ENCODE measurements at regions of chr6 and their contacts with region 1.

Region 1: DNA sequence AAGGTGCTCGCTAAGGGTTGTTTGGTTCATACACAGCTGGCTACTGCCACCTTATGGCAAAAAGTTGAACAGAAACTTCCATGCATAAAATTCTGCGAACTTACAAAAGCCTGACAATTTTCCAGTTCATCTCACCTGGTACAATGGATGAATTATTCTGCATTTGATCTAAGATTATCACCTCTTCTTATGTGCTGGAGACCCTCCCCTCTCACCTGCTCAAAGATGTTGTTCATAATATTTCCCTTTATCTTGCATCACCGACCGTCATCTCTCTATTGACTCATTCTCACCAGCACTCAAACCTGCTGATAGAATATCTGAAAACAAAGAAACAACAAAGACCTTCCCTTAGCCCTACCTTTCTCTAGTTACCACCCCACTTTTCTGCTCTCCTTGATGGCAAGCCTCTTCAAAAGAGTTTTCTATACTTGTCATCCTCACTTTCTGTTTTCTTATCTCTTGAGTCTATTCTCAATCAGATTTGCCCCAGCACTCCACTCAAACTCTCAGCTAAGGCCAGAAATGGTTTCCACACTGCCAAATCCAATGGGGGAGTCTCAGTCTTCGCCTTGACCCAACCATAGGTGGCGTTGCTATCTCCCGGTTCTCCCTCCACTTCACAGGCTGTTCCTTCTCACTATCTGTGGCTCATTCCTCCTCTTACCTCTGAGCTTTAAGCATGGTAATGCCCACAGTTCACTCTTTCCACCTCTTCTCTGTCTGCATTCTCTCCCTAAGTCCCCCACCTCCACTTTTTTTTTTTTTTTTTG is 25.8 kb downstream of the SNRNP48 start:
- DNase-seq: peak in 10 of 14 experiments; percentile 7 to 70 (median 16)
- ATAC-seq: peak; percentile 64
- H3K4me3 ChIP-seq: no peak overlapping the region
- H3K4me3 Mint-ChIP-seq: no peak overlapping the region
- H3K27ac ChIP-seq: no peak overlapping the region
- H3K27ac Mint-ChIP-seq: peak overlapping the region; percentile 4
- H3K4me1 ChIP-seq: peaks cover 5% of the 10 kb centered on the region
- H3K4me1 Mint-ChIP-seq: peaks cover 6% of the 10 kb centered on the region
- H3K27me3 ChIP-seq: peaks cover 0 to 3% of the 10 kb centered on the region in 2 experiments
- H3K27me3 Mint-ChIP-seq: no peaks in the 10 kb centered on the region
- CTCF ChIP-seq: peak; percentile 81

Region 2: DNA sequence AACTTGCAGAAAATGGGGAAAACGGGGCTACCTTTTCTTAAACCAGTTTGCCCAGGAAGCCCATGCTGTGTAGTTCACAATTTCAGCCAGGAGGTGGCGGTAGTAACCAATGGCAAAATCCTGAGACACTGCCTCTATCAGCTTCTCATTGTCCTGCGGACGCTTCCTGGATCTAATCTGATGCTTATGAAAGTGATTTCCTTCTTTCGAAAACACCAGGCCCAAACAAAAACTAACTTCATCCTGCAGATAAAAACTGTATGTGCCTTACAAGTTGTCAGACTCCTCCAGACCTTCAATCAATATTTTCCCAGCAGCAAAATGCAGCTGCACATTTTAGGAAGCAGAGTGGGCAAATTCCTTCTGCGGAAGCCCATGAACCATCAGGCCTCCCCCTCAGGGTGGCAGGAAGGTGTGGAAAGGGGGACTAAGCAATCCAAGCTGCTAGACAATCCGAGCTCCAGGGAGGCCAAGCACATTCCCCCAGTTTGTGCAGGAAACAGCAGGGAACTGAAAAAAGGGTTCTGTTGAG is 938.8 kb before region 1 on chr6:
- CTCF ChIA-PET with region 1: no interaction called
- POLR2A ChIA-PET with region 1: no interaction called
- intact Hi-C with region 1: loop called in 1 of 2 experiments (anchors 5 kb)
- DNase-seq: peak; percentile 62 to 87 (median 75)
- ATAC-seq: peak; percentile 99
- H3K4me3 ChIP-seq: no peak overlapping the region
- H3K4me3 Mint-ChIP-seq: no peak overlapping the region
- H3K27ac ChIP-seq: no peak overlapping the region
- H3K27ac Mint-ChIP-seq: peak overlapping the region; percentile 25
- H3K4me1 ChIP-seq: peaks cover 3% of the 10 kb centered on the region
- H3K4me1 Mint-ChIP-seq: peaks cover 15% of the 10 kb centered on the region
- H3K27me3 ChIP-seq: no peaks in the 10 kb centered on the region
- H3K27me3 Mint-ChIP-seq: no peaks in the 10 kb centered on the region
- CTCF ChIP-seq: peak; percentile 99

Region 3: GRCh38 chr6:7276199-7276524 is 339.6 kb before region 1 on chr6:
- CTCF ChIA-PET with region 1: interaction called, 8 read pairs
- POLR2A ChIA-PET with region 1: no interaction called
- intact Hi-C with region 1: loop called (anchors 1 kb)
- DNase-seq: no peak
- ATAC-seq: no peak
- H3K4me3 ChIP-seq: no peak overlapping the region
- H3K4me3 Mint-ChIP-seq: no peak overlapping the region
- H3K27ac ChIP-seq: no peak overlapping the region
- H3K27ac Mint-ChIP-seq: no peak overlapping the region
- H3K4me1 ChIP-seq: peaks cover 2% of the 10 kb centered on the region
- H3K4me1 Mint-ChIP-seq: peaks cover 2% of the 10 kb centered on the region
- H3K27me3 ChIP-seq: no peaks in the 10 kb centered on the region
- H3K27me3 Mint-ChIP-seq: no peaks in the 10 kb centered on the region
- CTCF ChIP-seq: peak; percentile 36

Region 4: GRCh38 chr6:7401075-7401474 is 214.7 kb before region 1 on chr6:
- CTCF ChIA-PET with region 1: interaction called, 3 read pairs
- POLR2A ChIA-PET with region 1: no interaction called
- intact Hi-C with region 1: loop called in 1 of 2 experiments (anchors 10 kb)
- DNase-seq: no peak
- ATAC-seq: no peak
- H3K4me3 ChIP-seq: no peak overlapping the region
- H3K4me3 Mint-ChIP-seq: no peak overlapping the region
- H3K27ac ChIP-seq: no peak overlapping the region
- H3K27ac Mint-ChIP-seq: no peak overlapping the region
- H3K4me1 ChIP-seq: no peaks in the 10 kb centered on the region
- H3K4me1 Mint-ChIP-seq: no peaks in the 10 kb centered on the region
- H3K27me3 ChIP-seq: no peaks in the 10 kb centered on the region
- H3K27me3 Mint-ChIP-seq: no peaks in the 10 kb centered on the region
- CTCF ChIP-seq: no peak

Region 5: DNA sequence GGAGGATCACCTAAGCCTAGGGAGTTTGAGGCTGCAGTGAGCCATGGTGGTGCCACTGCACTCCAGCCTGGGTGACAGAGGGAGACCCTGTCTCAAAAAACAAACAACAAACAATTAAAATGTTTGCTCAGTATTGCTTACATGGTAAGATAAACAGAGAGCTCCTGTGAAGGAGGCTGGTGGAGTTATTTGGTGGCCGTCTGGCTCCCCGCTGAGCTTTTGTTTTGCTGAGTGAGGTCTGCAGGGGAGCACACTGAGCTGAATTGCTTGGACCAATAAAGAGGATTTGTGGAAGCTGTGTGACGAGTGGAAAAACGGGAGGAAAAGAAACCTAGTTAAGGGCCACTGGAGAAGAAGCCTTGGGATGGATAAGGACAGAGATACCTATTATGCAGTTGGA is 69.0 kb after region 1 on chr6:
- CTCF ChIA-PET with region 1: no interaction called
- POLR2A ChIA-PET with region 1: no interaction called
- intact Hi-C with region 1: no loop called
- DNase-seq: no peak
- ATAC-seq: no peak
- H3K4me3 ChIP-seq: no peak overlapping the region
- H3K4me3 Mint-ChIP-seq: no peak overlapping the region
- H3K27ac ChIP-seq: no peak overlapping the region
- H3K27ac Mint-ChIP-seq: no peak overlapping the region
- H3K4me1 ChIP-seq: no peaks in the 10 kb centered on the region
- H3K4me1 Mint-ChIP-seq: no peaks in the 10 kb centered on the region
- H3K27me3 ChIP-seq: no peaks in the 10 kb centered on the region
- H3K27me3 Mint-ChIP-seq: peaks cover 48% of the 10 kb centered on the region
- CTCF ChIP-seq: no peak

Measured in CD4-positive, alpha-beta T cell (primary cell).